ENCODE measurements at regions of chr11 and their contacts with region 1.

Region 1: DNA sequence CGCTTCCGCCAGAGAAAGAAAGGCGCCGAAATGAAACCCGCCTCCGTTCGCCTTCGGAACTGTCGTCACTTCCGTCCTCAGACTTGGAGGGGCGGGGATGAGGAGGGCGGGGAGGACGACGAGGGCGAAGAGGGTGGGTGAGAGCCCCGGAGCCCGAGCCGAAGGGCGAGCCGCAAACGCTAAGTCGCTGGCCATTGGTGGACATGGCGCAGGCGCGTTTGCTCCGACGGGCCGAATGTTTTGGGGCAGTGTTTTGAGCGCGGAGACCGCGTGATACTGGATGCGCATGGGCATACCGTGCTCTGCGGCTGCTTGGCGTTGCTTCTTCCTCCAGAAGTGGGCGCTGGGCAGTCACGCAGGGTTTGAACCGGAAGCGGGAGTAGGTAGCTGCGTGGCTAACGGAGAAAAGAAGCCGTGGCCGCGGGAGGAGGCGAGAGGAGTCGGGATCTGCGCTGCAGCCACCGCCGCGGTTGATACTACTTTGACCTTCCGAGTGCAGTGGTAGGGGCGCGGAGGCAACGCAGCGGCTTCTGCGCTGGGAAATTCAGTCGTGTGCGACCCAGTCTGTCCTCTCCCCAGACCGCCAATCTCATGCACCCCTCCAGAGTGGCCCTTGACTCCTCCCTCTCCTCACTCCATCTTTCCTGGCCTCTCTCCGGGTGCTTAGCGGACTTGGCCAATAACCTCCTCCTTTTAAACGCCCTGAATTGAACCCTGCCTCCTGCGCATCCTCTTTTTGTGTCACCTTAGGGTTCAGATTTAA is at the start of gene ATM:
- DNase-seq: peak; percentile 99 to 100 (median 99)
- H3K4me3 ChIP-seq: peak within 1 kb of the TSS; percentile 72 to 89 (median 86)
- H3K4me3 Mint-ChIP-seq: peak within 1 kb of the TSS in 1 of 2 donors; percentile 98
- H3K27ac ChIP-seq: peak within 1 kb of the TSS; percentile 99
- H3K27ac Mint-ChIP-seq: no peak within 1 kb of the TSS
- H3K4me1 ChIP-seq: peaks cover 49 to 64% of the 10 kb centered on the region in 2 donors
- H3K4me1 Mint-ChIP-seq: peaks cover 43% of the 10 kb centered on the region
- H3K27me3 ChIP-seq: no peaks in the 10 kb centered on the region
- H3K27me3 Mint-ChIP-seq: peaks cover 0 to 3% (median 0%) of the 10 kb centered on the region in 3 donors
- CTCF ChIP-seq: peak; percentile 76
- polyA plus RNA-seq, gene ATM: 13.2 to 56.7 (median 21.4) TPM

Region 2: DNA sequence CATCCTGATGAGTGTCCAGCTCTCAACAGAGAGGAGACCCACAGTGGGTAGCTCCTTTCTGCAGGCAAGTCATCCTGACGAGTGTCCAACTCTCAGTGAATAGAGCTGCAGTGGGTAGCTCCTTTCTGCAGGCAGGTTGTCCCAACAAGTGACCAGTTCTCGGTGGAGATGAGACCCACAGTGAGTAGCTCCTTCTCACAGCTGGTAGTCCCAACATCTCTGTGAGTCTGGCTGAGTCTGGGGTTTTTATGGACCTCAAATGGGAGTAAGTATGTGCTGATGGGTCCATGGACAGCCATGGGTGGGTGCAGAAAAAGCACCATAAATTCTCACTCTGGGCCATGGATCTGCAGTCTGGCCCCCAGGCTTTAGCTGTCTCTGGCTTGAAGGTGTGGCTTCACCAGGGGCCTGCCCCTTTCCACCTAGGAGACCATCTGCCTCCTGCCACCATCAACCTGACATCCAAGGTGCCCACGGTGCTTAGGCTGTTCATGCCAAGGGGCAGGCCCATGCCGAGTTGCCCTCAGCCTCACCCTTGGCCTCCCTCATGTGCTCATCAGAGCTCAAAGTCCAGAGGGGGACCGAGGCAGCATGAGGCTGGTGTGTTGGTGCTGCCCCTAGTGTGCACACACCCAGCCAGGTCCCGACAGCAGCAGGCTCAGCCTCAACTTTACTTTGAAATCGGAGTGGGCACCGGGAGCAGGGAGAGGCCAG is 15.7 kb before region 1 on chr11:
- intact Hi-C with region 1: no loop called
- DNase-seq: no peak
- H3K4me3 ChIP-seq: no peak overlapping the region
- H3K4me3 Mint-ChIP-seq: no peak overlapping the region
- H3K27ac ChIP-seq: no peak overlapping the region
- H3K27ac Mint-ChIP-seq: no peak overlapping the region
- H3K4me1 ChIP-seq: peaks cover 0 to 3% of the 10 kb centered on the region in 2 donors
- H3K4me1 Mint-ChIP-seq: peaks cover 10% of the 10 kb centered on the region
- H3K27me3 ChIP-seq: no peaks in the 10 kb centered on the region
- H3K27me3 Mint-ChIP-seq: no peaks in the 10 kb centered on the region
- CTCF ChIP-seq: no peak

Region 3: GRCh38 chr11:108467091-108467823 is 244.4 kb after region 1 on chr11 and contains the start of gene C11orf65:
- intact Hi-C with region 1: loop called in 1 of 2 experiments (anchors 5 kb)
- DNase-seq: peak; percentile 95 to 97 (median 96)
- H3K4me3 ChIP-seq: peak within 1 kb of the TSS; percentile 67 to 91 (median 69)
- H3K4me3 Mint-ChIP-seq: peak within 1 kb of the TSS; percentile 97 to 98
- H3K27ac ChIP-seq: peak within 1 kb of the TSS; percentile 95 to 98
- H3K27ac Mint-ChIP-seq: peak within 1 kb of the TSS; percentile 99 to 100 (median 100)
- H3K4me1 ChIP-seq: peaks cover 18 to 25% of the 10 kb centered on the region in 2 donors
- H3K4me1 Mint-ChIP-seq: peaks cover 21% of the 10 kb centered on the region
- H3K27me3 ChIP-seq: no peaks in the 10 kb centered on the region
- H3K27me3 Mint-ChIP-seq: peaks cover 3 to 4% (median 4%) of the 10 kb centered on the region in 3 donors
- CTCF ChIP-seq: no peak
- polyA plus RNA-seq, gene C11orf65: not detected

Measured in CD14-positive monocyte (primary cell).